Lower leg skin (tissue), 4 donors: ENCODE measurements at regions of chr12 and their contacts with region 1.

Region 1: DNA sequence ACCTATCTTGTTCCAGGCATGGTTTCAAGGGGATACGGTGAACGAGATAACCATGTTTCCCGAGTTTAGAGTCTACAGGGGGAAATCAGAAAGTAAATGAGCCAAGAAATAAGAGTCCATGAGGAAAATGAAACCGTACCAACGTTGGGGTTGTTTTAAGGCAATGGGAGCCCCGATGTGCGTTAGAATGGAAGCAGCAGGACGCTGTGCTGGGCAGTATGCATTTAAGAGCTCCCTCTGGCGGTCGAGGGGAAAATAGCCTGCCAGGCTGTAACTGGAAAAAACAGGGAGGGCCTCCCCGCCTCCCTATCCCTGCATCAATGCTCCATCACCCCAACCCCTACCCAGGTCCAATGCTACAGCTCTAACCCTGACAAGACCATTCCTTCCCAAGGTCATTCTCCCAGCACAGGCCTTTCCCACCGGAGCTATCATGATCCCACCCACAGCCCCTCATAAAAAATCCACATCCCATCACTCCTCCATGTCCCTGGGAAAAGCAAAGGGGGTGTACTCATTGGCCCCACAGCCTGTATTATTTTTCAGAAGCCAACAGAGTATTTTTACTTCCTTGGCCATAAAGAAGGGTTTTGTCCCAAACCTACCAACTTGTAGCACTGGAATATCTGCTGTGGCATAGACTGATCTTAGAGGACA is 226.3 kb upstream of the NOS1 start:
- DNase-seq: peak in 1 of 2 donors; percentile 26
- H3K4me3 ChIP-seq: no peak overlapping the region
- CTCF ChIP-seq: peak in 1 of 3 donors; percentile 32
- POLR2A ChIP-seq: no peak

Region 2: DNA sequence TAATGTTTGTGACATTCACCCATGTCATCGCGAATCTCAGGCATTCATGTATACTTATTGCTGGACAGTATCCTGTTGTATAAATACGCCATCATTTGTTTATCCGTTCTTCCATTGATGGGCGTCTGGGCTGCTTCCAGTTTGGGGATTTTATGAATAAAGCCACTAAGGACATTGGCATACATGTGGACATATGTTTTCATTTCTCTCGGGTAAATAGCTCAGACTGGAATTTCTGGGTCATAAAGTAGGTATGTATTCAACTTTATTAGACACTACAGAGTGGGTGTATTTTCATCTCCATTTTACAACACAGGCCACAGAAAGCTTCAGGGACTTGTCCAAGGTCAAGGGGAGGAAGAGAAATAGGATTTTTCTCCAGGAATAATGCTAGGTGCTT is 755.4 kb before region 1 on chr12:
- intact Hi-C with region 1: loop called (anchors 10 kb)
- DNase-seq: no peak
- H3K4me3 ChIP-seq: no peak overlapping the region
- CTCF ChIP-seq: no peak
- POLR2A ChIP-seq: no peak

Region 3: DNA sequence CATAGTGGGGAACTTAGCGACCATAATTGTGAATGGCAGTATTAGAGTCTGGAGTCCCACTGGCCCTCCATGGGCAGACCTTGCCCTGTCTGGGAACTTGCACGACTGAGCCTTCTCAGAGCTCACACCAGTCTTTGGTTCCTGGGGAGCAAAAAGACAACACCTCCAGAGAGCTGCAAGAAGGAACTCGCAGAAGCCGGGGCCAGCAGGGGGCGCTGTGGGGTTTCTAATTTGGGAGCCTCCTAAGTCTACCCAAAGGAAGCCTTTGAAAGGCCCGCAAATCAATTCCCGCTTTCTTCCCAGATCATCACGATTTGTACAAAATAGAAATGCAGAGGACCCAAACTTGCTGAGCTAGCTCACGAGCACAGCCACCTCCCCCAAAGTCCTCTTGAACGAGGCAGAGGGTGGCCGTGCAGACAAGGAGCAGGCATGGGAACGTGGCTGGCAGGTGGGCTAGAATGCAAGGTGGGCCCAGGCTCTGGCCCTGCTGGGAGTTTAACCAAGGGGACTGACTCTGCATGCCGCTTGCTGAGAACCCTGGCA is 351.2 kb before region 1 on chr12:
- intact Hi-C with region 1: loop called (anchors 10 kb)
- DNase-seq: peak; percentile 69 to 96
- H3K4me3 ChIP-seq: no peak overlapping the region
- CTCF ChIP-seq: no peak
- POLR2A ChIP-seq: no peak